Colonic mucosa (tissue), 4 donors: ENCODE measurements at regions of chr6 and their contacts with region 1.

Region 1: GRCh38 chr6:30541515-30542403 is 14.5 kb downstream of the GNL1 start:
- DNase-seq: peak; percentile 81
- H3K4me3 ChIP-seq: peak overlapping the region; percentile 26
- H3K27ac ChIP-seq: peak overlapping the region; percentile 10
- H3K4me1 ChIP-seq: no peaks in the 10 kb centered on the region
- H3K27me3 ChIP-seq: no peaks in the 10 kb centered on the region
- CTCF ChIP-seq: peak; percentile 99

Region 2: GRCh38 chr6:30600451-30600961 is 58.7 kb after region 1 on chr6:
- intact Hi-C with region 1: loop called (anchors 5 kb)
- DNase-seq: no peak
- H3K4me3 ChIP-seq: no peak overlapping the region
- H3K27ac ChIP-seq: no peak overlapping the region
- H3K4me1 ChIP-seq: no peaks in the 10 kb centered on the region
- H3K27me3 ChIP-seq: no peaks in the 10 kb centered on the region
- CTCF ChIP-seq: no peak

Region 3: DNA sequence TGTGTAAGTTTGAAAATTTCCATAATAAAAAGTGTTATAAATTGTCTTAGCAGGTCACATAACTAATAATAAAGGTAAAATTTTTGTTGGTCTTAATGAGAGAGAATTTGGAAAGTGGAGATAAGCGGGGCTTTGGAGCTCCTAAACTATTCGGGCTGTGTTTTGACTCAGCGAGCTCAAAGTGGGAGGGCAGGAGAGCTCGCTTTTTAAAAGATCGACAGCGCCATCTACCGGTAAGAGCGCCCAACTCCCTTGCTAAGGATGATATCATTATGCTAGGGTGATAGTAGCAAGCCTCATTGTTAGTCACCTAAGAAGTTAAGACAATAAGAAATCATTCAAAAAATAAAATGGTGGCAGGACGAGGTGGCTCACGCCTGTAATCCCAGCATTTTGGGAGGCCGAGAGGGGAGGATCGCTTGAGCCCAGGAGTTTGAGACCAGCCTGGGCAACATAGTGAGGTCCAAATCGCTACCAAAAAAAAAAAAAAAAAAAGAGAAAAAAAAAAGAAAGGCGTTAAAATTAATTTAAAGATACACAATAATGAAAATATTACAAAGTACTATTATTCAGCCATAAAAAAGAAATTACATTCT is 545.8 kb after region 1 on chr6:
- intact Hi-C with region 1: loop called (anchors 10 kb)
- DNase-seq: peak; percentile 94
- H3K4me3 ChIP-seq: no peak overlapping the region
- H3K27ac ChIP-seq: no peak overlapping the region
- H3K4me1 ChIP-seq: no peaks in the 10 kb centered on the region
- H3K27me3 ChIP-seq: no peaks in the 10 kb centered on the region
- CTCF ChIP-seq: peak; percentile 65